ENCODE measurements at regions of chr1 and their contacts with region 1.

Region 1: GRCh38 chr1:117101334-117101733 is 20.2 kb downstream of the TRIM45 start:
- DNase-seq: no peak
- ATAC-seq: no peak
- H3K4me3 ChIP-seq: no peak overlapping the region
- H3K4me3 Mint-ChIP-seq: no peak overlapping the region
- H3K27ac ChIP-seq: no peak overlapping the region
- H3K27ac Mint-ChIP-seq: no peak overlapping the region
- H3K4me1 ChIP-seq: no peaks in the 10 kb centered on the region
- H3K4me1 Mint-ChIP-seq: no peaks in the 10 kb centered on the region
- H3K27me3 ChIP-seq: no peaks in the 10 kb centered on the region
- H3K27me3 Mint-ChIP-seq: no peaks in the 10 kb centered on the region
- CTCF ChIP-seq: no peak

Region 2: GRCh38 chr1:117121776-117122697 is 20.7 kb after region 1 on chr1:
- CTCF ChIA-PET with region 1: no interaction called
- POLR2A ChIA-PET with region 1: interaction called, 11 read pairs
- intact Hi-C with region 1: no loop called
- DNase-seq: peak; percentile 67 to 89 (median 81)
- ATAC-seq: peak; percentile 84
- H3K4me3 ChIP-seq: peak overlapping the region; percentile 56 to 91
- H3K4me3 Mint-ChIP-seq: peak overlapping the region; percentile 84
- H3K27ac ChIP-seq: no peak overlapping the region
- H3K27ac Mint-ChIP-seq: no peak overlapping the region
- H3K4me1 ChIP-seq: peaks cover 10% of the 10 kb centered on the region
- H3K4me1 Mint-ChIP-seq: peaks cover 9% of the 10 kb centered on the region
- H3K27me3 ChIP-seq: peaks cover 0 to 2% of the 10 kb centered on the region in 2 experiments
- H3K27me3 Mint-ChIP-seq: peaks cover 11% of the 10 kb centered on the region
- CTCF ChIP-seq: peak; percentile 69

Region 3: DNA sequence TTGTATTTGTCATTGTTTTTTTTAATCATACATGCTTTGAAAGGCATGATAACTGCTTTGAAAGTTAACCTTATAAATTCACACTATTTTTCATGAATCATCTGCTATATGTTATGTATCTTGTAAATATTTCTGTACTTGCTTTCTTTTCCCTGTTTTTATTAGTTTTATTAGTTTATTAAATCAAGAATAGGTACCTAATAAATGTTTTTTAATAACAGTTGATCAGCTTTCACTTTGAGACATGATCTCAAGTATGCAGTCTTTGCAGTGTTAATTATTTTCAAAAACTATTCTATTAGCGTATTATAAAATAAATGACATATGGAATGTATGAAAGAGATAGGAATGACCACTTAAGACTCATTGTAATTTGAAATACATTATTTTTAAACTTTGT is 393.7 kb after region 1 on chr1:
- CTCF ChIA-PET with region 1: no interaction called
- POLR2A ChIA-PET with region 1: no interaction called
- intact Hi-C with region 1: no loop called
- DNase-seq: no peak
- ATAC-seq: no peak
- H3K4me3 ChIP-seq: no peak overlapping the region
- H3K4me3 Mint-ChIP-seq: no peak overlapping the region
- H3K27ac ChIP-seq: no peak overlapping the region
- H3K27ac Mint-ChIP-seq: no peak overlapping the region
- H3K4me1 ChIP-seq: no peaks in the 10 kb centered on the region
- H3K4me1 Mint-ChIP-seq: no peaks in the 10 kb centered on the region
- H3K27me3 ChIP-seq: no peaks in the 10 kb centered on the region
- H3K27me3 Mint-ChIP-seq: no peaks in the 10 kb centered on the region
- CTCF ChIP-seq: no peak